Psoas muscle (tissue), 8 donors: ENCODE measurements at regions of chr1 and their contacts with region 1.

Region 1: DNA sequence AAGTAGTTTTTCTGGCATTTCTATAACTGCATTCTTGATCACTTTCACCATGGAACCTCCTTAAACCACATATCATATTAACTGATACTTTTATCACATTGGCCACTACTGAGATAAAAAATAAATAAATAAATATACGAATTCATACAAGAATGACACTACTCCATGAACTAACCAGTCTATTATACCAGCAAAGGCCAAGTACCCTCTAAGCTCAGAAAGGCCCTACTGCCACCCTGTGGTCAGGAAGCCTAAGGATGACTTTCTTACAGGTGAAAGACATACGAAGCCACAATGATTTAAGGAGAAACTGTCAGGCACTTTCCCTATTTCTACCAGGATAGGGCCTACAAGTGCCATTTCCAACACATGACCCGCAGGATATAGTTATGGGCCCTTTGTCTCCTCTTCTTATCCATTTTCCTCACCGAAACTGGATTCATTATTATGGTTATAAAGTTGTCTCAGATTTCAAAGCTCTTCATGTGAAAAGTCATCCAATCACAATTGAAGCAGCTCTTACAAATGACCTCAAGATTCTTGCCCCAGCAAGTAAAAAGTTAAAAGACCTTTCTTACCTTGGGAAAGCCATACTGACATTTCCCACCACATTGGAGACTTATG is 23.9 kb downstream of the DNAJC8 start:
- DNase-seq: peak; percentile 37 to 59
- ATAC-seq: peak; percentile 83 to 90 (median 83)
- H3K4me3 ChIP-seq: no peak overlapping the region
- H3K27ac ChIP-seq: peak overlapping the region; percentile 62
- H3K4me1 ChIP-seq: peaks cover 22% of the 10 kb centered on the region
- H3K27me3 ChIP-seq: no peaks in the 10 kb centered on the region
- CTCF ChIP-seq: peak; percentile 68

Region 2: DNA sequence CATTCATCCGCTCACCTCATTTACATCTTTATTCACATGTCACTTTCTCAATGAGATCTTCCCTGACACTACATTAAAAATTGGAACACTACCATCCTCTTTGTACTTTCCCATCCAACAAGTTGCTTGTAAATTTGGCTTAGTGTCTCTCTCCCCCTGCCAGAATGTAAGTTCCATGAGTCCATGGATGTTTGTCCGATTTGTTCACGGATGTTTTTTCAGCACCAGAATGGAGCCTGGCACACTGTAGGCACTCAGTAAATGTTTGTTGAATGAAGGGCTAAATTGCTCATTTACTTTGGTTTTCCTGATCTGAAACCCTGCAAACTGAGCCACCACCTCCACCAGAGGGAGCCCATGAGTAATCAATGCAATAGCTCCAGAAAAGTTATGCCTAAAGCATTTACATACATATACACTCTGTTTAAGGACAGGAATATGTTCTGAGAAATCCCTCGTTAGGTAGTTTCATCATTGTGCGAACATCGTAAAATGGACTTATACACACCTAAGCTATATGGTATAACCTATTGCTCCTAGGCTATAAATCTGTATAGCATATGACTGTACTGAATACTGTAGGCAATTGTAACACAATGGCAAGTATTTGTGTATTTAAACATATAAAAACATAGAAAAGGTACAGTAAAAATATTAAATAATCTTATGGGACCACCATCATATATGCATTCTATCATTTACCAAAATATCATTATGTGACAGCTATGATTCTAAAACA is 117.7 kb before region 1 on chr1:
- intact Hi-C with region 1: loop called (anchors 2 kb)
- DNase-seq: peak; percentile 54 to 72
- ATAC-seq: no peak
- H3K4me3 ChIP-seq: no peak overlapping the region
- H3K27ac ChIP-seq: no peak overlapping the region
- H3K4me1 ChIP-seq: peaks cover 18% of the 10 kb centered on the region
- H3K27me3 ChIP-seq: no peaks in the 10 kb centered on the region
- CTCF ChIP-seq: peak; percentile 83